Panc1 (cell line): ENCODE measurements at regions of chr10 and their contacts with region 1.

Region 1: GRCh38 chr10:31776159-31776558 is 152.5 kb downstream of the ARHGAP12 start:
- DNase-seq: no peak
- ATAC-seq: no peak
- H3K4me3 ChIP-seq: no peak overlapping the region
- H3K27ac ChIP-seq: no peak overlapping the region
- H3K4me1 ChIP-seq: peaks cover 5% of the 10 kb centered on the region; the same call in 1 of the 2 replicates
- H3K27me3 ChIP-seq: no peaks in the 10 kb centered on the region
- CTCF ChIP-seq: no peak

Region 2: DNA sequence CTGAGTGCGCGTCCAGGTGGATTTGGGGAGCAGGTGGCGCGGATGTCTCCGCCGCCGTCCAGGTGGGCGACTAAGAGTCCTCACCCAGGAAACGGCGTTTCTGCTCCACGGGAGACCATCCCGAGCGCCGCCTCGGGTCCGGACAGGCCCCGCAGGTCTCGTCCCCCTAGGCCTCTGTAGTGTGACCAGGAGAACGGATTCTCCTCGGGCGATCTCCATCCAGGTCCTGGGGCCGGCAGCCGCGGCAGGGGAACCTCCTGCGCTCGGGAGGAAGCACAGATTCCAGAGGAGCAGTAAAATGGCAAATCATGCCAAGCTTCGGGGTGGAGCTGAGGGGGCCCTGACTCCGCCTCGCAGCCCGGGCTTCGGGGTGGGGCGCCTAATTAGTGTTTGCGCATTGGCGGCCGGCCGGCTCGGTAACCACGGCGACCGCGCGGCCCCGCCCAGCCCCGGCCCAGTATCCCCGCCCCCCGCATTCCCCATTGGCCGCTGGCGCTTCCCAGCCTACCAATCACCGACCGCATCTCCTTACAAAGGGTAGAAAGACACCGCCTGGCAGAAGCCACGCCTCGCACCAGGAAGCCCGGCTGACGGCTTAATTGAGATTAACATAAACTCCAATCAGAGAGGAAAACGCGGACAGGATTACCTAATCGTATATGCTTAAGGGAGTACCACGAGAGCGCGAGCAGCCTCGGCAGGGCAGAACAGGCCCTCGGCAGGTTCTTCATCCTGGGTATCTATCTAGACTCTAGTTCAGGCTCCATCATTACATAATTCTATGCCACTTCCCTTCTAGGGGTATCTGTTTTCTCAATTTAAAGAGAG is 16.1 kb before region 1 on chr10:
- CTCF ChIA-PET with region 1: interaction called, 17 read pairs
- POLR2A ChIA-PET with region 1: no interaction called
- in situ Hi-C with region 1: no loop called
- intact Hi-C with region 1: no loop called
- DNase-seq: peak; percentile 58
- ATAC-seq: peak; percentile 92
- H3K4me3 ChIP-seq: peak overlapping the region; percentile 70 to 73
- H3K27ac ChIP-seq: peak overlapping the region; percentile 90
- H3K4me1 ChIP-seq: peaks cover 44% of the 10 kb centered on the region
- H3K27me3 ChIP-seq: no peaks in the 10 kb centered on the region
- CTCF ChIP-seq: no peak